Gastrocnemius medialis (tissue), 4 donors: ENCODE measurements at regions of chr2 and their contacts with region 1.

Region 1: GRCh38 chr2:96739633-96740428 is at the start of gene LMAN2L:
- DNase-seq: peak; percentile 98 to 99
- ATAC-seq: peak; percentile 98 to 99
- H3K4me3 ChIP-seq: peak within 1 kb of the TSS; percentile 77 to 90 (median 84)
- H3K27ac ChIP-seq: peak within 1 kb of the TSS; percentile 85 to 88 (median 88)
- H3K4me1 ChIP-seq: peaks cover 15 to 16% of the 10 kb centered on the region in 2 donors
- H3K27me3 ChIP-seq: no peaks in the 10 kb centered on the region
- CTCF ChIP-seq: peak in 2 of 5 experiments; percentile 11 to 21
- POLR2A ChIP-seq: peak; percentile 57 to 64
- total RNA-seq, gene LMAN2L: 8.8 to 17.3 (median 16.4) TPM

Region 2: GRCh38 chr2:96760036-96760985 is 20.5 kb after region 1 on chr2 and contains the start of gene CNNM4:
- in situ Hi-C with region 1: no loop called
- intact Hi-C with region 1: loop called (anchors 1 kb)
- DNase-seq: peak; percentile 89 to 93
- ATAC-seq: peak; percentile 80 to 87
- H3K4me3 ChIP-seq: peak within 1 kb of the TSS; percentile 64 to 87 (median 74)
- H3K27ac ChIP-seq: peak within 1 kb of the TSS; percentile 83 to 91 (median 88)
- H3K4me1 ChIP-seq: peaks cover 39 to 41% of the 10 kb centered on the region in 2 donors
- H3K27me3 ChIP-seq: no peaks in the 10 kb centered on the region
- CTCF ChIP-seq: peak in 1 of 5 experiments; percentile 36
- POLR2A ChIP-seq: peak; percentile 84 to 90
- total RNA-seq, gene CNNM4: 5.4 to 20.1 (median 9.1) TPM